Endothelial cell of umbilical vein (primary cell): ENCODE measurements at regions of chr1 and their contacts with region 1.

Region 1: GRCh38 chr1:203267347-203267846 is 37.9 kb upstream of the BTG2 start:
- DNase-seq: peak; percentile 95
- H3K4me3 ChIP-seq: peak overlapping the region; percentile 55 to 89 (median 89)
- H3K27ac ChIP-seq: no peak overlapping the region
- H3K4me1 ChIP-seq: peaks cover 4% of the 10 kb centered on the region
- H3K27me3 ChIP-seq: no peaks in the 10 kb centered on the region
- CTCF ChIP-seq: peak; percentile 84 to 88
- POLR2A ChIP-seq: peak; percentile 46

Region 2: GRCh38 chr1:203031467-203031866 is 235.9 kb before region 1 on chr1:
- CTCF ChIA-PET with region 1: interaction called, 23 read pairs
- POLR2A ChIA-PET with region 1: no interaction called
- dilution Hi-C with region 1: no loop called
- intact Hi-C with region 1: no loop called
- DNase-seq: no peak
- H3K4me3 ChIP-seq: no peak overlapping the region
- H3K27ac ChIP-seq: no peak overlapping the region
- H3K4me1 ChIP-seq: peaks cover 5% of the 10 kb centered on the region
- H3K27me3 ChIP-seq: peaks cover 19 to 31% of the 10 kb centered on the region in 2 experiments
- CTCF ChIP-seq: peak; percentile 11 to 31
- POLR2A ChIP-seq: no peak

Region 3: GRCh38 chr1:203117611-203118575 is 149.5 kb before region 1 on chr1:
- CTCF ChIA-PET with region 1: interaction called, 63 read pairs
- POLR2A ChIA-PET with region 1: no interaction called
- dilution Hi-C with region 1: no loop called
- intact Hi-C with region 1: loop called (anchors 2 kb)
- DNase-seq: peak; percentile 51
- H3K4me3 ChIP-seq: no peak overlapping the region
- H3K27ac ChIP-seq: no peak overlapping the region
- H3K4me1 ChIP-seq: no peaks in the 10 kb centered on the region
- H3K27me3 ChIP-seq: peaks cover 19 to 29% of the 10 kb centered on the region in 2 experiments
- CTCF ChIP-seq: peak; percentile 70 to 95
- POLR2A ChIP-seq: no peak

Region 4: DNA sequence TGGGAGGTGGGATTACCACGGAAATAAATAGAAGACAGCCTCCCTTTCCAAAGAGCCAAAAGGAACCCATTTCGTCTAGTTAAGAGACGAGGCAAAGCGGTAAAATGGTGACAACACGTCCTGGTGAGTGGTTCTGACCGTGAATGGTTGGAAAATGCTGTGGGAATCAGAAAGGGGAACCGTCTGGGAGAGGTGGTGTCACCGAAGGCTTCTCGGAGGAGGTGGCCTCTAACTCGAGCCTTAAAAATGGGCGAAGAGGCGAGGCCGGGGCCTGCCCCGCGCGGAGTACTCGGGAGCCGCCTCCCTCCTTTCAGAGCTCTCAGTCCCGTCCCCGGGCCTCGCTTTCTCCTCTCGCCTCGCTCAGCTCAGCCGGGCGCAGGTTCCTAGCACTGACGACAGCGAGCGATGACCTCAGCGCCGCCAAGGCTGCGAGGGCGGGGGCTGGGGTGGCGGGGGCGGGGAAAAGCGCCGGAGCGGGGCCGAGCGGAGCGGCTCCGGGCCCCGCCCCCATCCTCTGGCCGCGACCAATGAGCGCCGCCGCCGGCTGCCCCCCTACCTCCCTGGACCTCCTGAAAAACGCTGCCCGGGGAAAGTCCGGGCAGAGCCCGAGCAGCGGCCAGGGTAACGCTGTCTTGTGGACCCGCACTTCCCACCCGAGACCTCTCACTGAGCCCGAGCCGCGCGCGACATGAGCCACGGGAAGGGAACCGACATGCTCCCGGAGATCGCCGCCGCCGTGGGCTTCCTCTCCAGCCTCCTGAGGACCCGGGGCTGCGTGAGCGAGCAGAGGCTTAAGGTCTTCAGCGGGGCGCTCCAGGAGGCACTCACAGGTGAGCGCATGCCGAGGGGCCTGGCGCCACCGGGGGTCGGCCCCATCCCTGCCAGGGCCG is 37.8 kb after region 1 on chr1 and contains the start of gene BTG2:
- CTCF ChIA-PET with region 1: interaction called, 88 read pairs
- POLR2A ChIA-PET with region 1: interaction called, 5 read pairs
- dilution Hi-C with region 1: no loop called
- intact Hi-C with region 1: no loop called
- DNase-seq: peak; percentile 91
- H3K4me3 ChIP-seq: peak within 1 kb of the TSS; percentile 70 to 97 (median 73)
- H3K27ac ChIP-seq: peak within 1 kb of the TSS; percentile 42
- H3K4me1 ChIP-seq: peaks cover 19% of the 10 kb centered on the region
- H3K27me3 ChIP-seq: peaks cover 4 to 7% of the 10 kb centered on the region in 2 experiments
- CTCF ChIP-seq: no peak
- POLR2A ChIP-seq: peak; percentile 99
- total RNA-seq, gene BTG2: 40.3 and 50.1 TPM in 2 replicates

Region 5: DNA sequence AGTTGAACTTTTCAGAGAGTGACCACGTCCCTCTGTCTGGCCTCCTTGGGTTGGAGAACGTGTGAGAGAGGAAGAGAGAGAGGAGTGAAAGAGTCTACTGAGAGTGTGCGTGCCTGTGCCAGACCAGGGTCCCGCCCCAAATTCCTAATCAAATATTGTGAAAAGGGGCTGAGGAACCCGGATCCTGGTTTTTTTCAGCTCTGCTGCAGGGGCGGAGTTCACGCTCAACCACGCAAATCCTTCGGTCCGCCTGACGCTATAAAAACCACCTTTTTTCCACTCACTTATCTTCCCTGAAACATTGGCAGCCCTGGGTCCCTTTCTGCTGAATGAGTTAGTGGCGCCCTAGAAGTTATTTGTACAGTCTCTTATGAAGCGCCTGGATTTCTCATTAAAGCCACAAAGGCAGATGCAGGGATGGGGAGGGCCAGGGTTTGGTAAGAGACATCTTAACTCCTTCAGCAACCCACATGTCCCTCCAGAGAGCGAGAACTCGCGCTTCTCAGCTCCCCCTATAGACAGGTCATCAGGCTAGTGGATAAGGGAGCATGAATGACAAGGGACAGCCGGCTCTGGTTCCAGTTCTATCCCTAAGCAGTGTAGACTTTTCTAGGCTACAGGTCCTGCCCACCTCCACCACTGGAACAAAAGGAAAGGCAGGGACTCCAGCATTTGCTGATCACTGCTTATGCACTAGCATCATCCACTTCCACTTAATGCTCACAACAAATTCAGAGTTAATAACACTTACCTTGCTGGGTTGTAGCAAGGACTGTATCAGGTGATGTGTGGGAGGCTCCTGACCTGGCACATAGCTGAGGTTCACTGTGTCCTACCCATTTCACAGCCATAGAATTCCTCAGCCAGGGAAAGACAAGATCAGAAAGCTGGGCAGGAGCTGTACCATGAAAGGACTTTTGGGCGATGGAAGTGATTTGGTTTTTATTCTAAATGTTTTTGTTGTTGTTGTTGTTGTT is 83.9 kb after region 1 on chr1 and contains the start of gene FMOD:
- CTCF ChIA-PET with region 1: interaction called, 1,014 read pairs
- POLR2A ChIA-PET with region 1: no interaction called
- dilution Hi-C with region 1: no loop called
- intact Hi-C with region 1: no loop called
- DNase-seq: no peak
- H3K4me3 ChIP-seq: no peak within 1 kb of the TSS
- H3K27ac ChIP-seq: no peak within 1 kb of the TSS
- H3K4me1 ChIP-seq: no peaks in the 10 kb centered on the region
- H3K27me3 ChIP-seq: peaks cover 10 to 34% of the 10 kb centered on the region in 2 experiments
- CTCF ChIP-seq: no peak
- POLR2A ChIP-seq: no peak
- total RNA-seq, gene FMOD: 0.11 TPM in 1 of 2 replicates, not detected in the other

Region 6: DNA sequence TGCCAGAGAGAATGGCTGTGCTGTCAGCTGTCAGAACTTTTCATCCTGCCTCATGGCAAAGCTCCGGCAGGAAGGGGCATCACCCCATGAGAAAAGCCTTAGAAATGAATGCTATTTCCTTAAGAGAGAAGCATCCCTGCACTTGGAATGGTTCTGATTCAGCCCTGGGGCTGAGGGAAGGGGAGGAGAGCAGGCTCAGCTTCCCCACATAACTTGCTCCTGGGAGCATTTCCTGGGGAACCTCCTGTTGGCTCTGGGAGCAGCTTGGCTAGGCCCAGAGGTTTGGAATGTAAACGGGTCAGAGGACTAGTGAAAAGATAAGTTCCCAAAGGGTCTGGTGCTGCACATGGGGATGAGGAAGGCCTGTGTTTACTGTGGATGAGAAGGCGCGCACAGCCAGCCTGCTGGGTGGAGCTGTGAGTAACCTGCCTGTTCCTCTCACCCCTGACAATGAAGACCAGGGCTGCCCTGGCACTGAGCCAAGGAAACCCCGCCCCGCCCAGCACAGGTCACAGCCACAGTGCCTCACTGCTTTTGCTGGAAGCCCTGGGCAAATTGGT is 213.2 kb after region 1 on chr1:
- CTCF ChIA-PET with region 1: interaction called, 10 read pairs
- POLR2A ChIA-PET with region 1: no interaction called
- dilution Hi-C with region 1: no loop called
- intact Hi-C with region 1: no loop called
- DNase-seq: peak; percentile 40
- H3K4me3 ChIP-seq: no peak overlapping the region
- H3K27ac ChIP-seq: no peak overlapping the region
- H3K4me1 ChIP-seq: peaks cover 7% of the 10 kb centered on the region
- H3K27me3 ChIP-seq: peaks cover 17 to 23% of the 10 kb centered on the region in 2 experiments
- CTCF ChIP-seq: no peak
- POLR2A ChIP-seq: no peak